ENCODE measurements at regions of chr10 and their contacts with region 1.

Region 1: GRCh38 chr10:30059209-30060107 is at the start of gene JCAD:
- DNase-seq: peak; percentile 73
- H3K4me3 ChIP-seq: peak within 1 kb of the TSS; percentile 61 to 68 (median 66)
- H3K27ac ChIP-seq: peak within 1 kb of the TSS; percentile 80 to 91 (median 85)
- H3K4me1 ChIP-seq: peaks cover 2 to 16% (median 8%) of the 10 kb centered on the region in 4 donors
- H3K27me3 ChIP-seq: peaks cover 35% of the 10 kb centered on the region
- CTCF ChIP-seq: no peak
- EP300 ChIP-seq: no peak
- POLR2A ChIP-seq: no peak
- total RNA-seq, gene JCAD: 13.0 to 40.8 (median 19.9) TPM

Region 2: GRCh38 chr10:30114871-30115625 is 55.6 kb after region 1 on chr10:
- in situ Hi-C with region 1: no loop called
- intact Hi-C with region 1: loop called (anchors 10 kb)
- DNase-seq: no peak
- H3K4me3 ChIP-seq: peak overlapping the region in 2 of 4 donors; percentile 1 to 9
- H3K27ac ChIP-seq: peak overlapping the region; percentile 22 to 73 (median 62)
- H3K4me1 ChIP-seq: no peaks in the 10 kb centered on the region
- H3K27me3 ChIP-seq: no peaks in the 10 kb centered on the region
- CTCF ChIP-seq: no peak
- EP300 ChIP-seq: no peak
- POLR2A ChIP-seq: no peak

Region 3: GRCh38 chr10:30186371-30186875 is 127.0 kb after region 1 on chr10:
- in situ Hi-C with region 1: no loop called
- intact Hi-C with region 1: loop called (anchors 10 kb)
- DNase-seq: peak; percentile 12
- H3K4me3 ChIP-seq: peak overlapping the region in 1 of 4 donors; percentile 5
- H3K27ac ChIP-seq: peak overlapping the region in 1 of 4 donors; percentile 17
- H3K4me1 ChIP-seq: peaks cover 0 to 25% (median 9%) of the 10 kb centered on the region in 4 donors
- H3K27me3 ChIP-seq: no peaks in the 10 kb centered on the region
- CTCF ChIP-seq: no peak
- EP300 ChIP-seq: no peak
- POLR2A ChIP-seq: no peak

Region 4: GRCh38 chr10:31133628-31134302 is 1074.3 kb after region 1 on chr10:
- in situ Hi-C with region 1: no loop called
- intact Hi-C with region 1: no loop called
- DNase-seq: peak; percentile 85
- H3K4me3 ChIP-seq: peak overlapping the region; percentile 1 to 59 (median 38)
- H3K27ac ChIP-seq: peak overlapping the region; percentile 75 to 87 (median 86)
- H3K4me1 ChIP-seq: peaks cover 5 to 24% (median 21%) of the 10 kb centered on the region in 4 donors
- H3K27me3 ChIP-seq: no peaks in the 10 kb centered on the region
- CTCF ChIP-seq: no peak
- EP300 ChIP-seq: no peak
- POLR2A ChIP-seq: no peak

Measured in transverse colon (tissue), 4 donors.